Activated naive CD4-positive, alpha-beta T cell treated with anti-CD3 and anti-CD28 coated beads for 36 hours (primary cell): ENCODE measurements at regions of chr3 and their contacts with region 1.

Region 1: DNA sequence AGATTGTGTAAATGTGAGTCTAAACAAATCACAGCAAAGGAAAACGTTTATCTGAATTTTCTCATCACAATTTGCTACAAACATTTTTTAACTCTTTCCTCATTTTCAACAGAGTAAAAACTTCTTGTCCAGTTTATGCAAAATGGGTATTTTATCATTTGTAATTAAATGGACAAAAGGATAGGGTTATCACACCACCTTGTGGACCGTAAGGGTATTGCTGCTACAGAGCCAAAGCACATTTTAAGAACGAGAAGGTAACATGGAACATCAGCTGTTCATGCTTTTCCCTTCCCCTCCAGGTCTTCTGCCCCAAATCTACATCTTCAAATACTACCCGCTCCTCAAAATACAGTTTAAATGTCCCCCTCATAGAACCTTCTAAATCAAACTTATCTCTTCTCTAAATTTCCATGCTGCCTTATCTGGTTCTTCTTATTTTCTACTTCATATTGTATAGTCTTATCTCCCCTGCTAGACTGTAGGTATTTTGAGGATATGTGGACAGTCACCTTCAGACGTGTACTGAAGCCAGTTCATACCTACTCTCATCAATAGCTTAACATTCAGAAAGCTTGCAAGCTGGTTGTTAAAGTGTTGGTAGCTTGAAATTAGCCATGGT is 12.8 kb upstream of the SETMAR start:
- DNase-seq: peak; percentile 56
- H3K4me3 Mint-ChIP-seq: no peak overlapping the region
- H3K27ac Mint-ChIP-seq: no peak overlapping the region
- H3K4me1 Mint-ChIP-seq: peaks cover 12% of the 10 kb centered on the region
- H3K27me3 Mint-ChIP-seq: no peaks in the 10 kb centered on the region

Region 2: DNA sequence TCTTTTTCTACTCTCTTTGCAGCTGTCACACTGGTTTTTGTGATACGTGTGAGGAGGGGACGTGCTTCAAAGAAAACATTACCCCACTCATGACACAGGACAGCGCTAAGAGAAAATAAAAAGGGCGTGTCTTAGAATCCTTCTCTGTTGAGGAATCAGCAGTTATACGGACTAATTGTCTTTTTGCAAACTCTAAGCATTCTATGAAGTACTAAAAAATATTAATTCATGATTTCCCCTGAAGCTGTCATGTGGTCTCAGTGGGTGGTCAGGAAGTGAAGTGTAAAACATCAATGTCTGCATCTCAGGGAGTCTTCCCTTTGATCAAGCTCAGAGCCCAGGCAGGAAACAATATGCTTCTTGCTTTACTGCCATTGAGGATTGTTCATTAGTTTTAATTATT is 993.4 kb before region 1 on chr3:
- CTCF ChIA-PET with region 1: interaction called, 4 read pairs
- intact Hi-C with region 1: loop called (anchors 5 kb)
- DNase-seq: no peak
- H3K4me3 Mint-ChIP-seq: peak overlapping the region; percentile 34
- H3K27ac Mint-ChIP-seq: no peak overlapping the region
- H3K4me1 Mint-ChIP-seq: peaks cover 21% of the 10 kb centered on the region
- H3K27me3 Mint-ChIP-seq: no peaks in the 10 kb centered on the region

Region 3: GRCh38 chr3:4306860-4307259 is 16.5 kb after region 1 on chr3:
- CTCF ChIA-PET with region 1: no interaction called
- intact Hi-C with region 1: no loop called
- DNase-seq: no peak
- H3K4me3 Mint-ChIP-seq: no peak overlapping the region
- H3K27ac Mint-ChIP-seq: no peak overlapping the region
- H3K4me1 Mint-ChIP-seq: peaks cover 27% of the 10 kb centered on the region
- H3K27me3 Mint-ChIP-seq: no peaks in the 10 kb centered on the region